Panc1 (cell line): ENCODE measurements at regions of chr10 and their contacts with region 1.

Region 1: GRCh38 chr10:91908337-91909116 is 759 bp downstream of the FGFBP3 start:
- DNase-seq: peak; percentile 87
- ATAC-seq: peak; percentile 96
- H3K4me3 ChIP-seq: peak overlapping the region; percentile 68 to 89
- H3K27ac ChIP-seq: peak overlapping the region; percentile 83
- H3K4me1 ChIP-seq: peaks cover 10% of the 10 kb centered on the region; the same call in 1 of the 2 replicates
- H3K27me3 ChIP-seq: no peaks in the 10 kb centered on the region
- CTCF ChIP-seq: peak; percentile 95

Region 2: GRCh38 chr10:90862908-90863514 is 1045.5 kb before region 1 on chr10:
- CTCF ChIA-PET with region 1: no interaction called
- POLR2A ChIA-PET with region 1: interaction called, 10 read pairs
- in situ Hi-C with region 1: no loop called
- intact Hi-C with region 1: no loop called
- DNase-seq: peak; percentile 36
- ATAC-seq: no peak
- H3K4me3 ChIP-seq: no peak overlapping the region
- H3K27ac ChIP-seq: no peak overlapping the region
- H3K4me1 ChIP-seq: no peaks in the 10 kb centered on the region; the same call in 1 of the 2 replicates
- H3K27me3 ChIP-seq: peaks cover 27% of the 10 kb centered on the region
- CTCF ChIP-seq: peak; percentile 82; the same call in 1 of the 2 replicates

Region 3: GRCh38 chr10:91389636-91390512 is 518.7 kb before region 1 on chr10:
- CTCF ChIA-PET with region 1: no interaction called
- POLR2A ChIA-PET with region 1: no interaction called
- in situ Hi-C with region 1: no loop called
- intact Hi-C with region 1: loop called (anchors 10 kb)
- DNase-seq: no peak
- ATAC-seq: peak; percentile 93
- H3K4me3 ChIP-seq: no peak overlapping the region
- H3K27ac ChIP-seq: no peak overlapping the region
- H3K4me1 ChIP-seq: no peaks in the 10 kb centered on the region
- H3K27me3 ChIP-seq: peaks cover 21% of the 10 kb centered on the region
- CTCF ChIP-seq: peak; percentile 73; the same call in 1 of the 2 replicates

Region 4: DNA sequence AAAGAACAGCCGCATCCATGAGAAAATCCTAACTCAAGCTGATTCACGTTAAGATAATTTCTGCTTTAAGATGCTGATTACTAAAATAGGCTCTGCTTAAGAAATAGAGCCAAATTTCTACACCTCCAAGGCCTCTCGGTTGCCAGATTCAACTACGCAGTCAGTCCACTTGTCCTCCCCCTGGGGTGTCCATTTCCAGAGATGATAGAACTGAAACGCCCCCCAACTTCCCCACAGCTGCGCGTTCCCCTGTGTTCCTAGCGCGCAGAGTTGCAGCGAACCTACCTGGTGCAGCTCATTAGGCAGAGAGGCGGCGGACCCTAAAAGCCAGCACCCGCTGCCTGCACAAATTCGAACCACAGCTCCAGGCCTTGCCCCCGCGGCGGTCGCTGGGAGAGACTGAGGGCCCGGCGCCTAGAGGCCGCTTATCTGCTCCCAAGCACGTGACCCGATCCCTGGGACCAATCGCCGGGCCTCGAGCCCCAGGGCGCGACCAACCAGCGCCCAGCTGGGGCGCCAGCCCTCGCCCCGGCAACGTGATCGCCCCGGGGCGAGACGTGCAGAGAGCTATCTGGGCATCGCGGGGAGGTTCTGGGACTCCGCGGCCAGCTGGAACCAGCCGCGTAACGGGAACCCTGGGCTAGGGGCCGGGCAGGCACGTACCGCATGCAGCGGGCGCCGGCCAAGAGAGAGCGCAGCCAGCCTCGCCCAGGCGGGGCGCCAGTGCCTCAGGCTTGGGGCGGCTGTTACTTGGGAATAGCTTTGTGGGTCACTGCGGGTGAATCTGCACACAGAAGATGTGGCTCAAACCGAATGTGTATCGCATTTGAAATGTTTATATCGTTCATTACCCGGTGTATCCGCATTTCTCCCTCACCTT is 275.6 kb before region 1 on chr10 and contains the start of gene PPP1R3C:
- CTCF ChIA-PET with region 1: no interaction called
- POLR2A ChIA-PET with region 1: no interaction called
- in situ Hi-C with region 1: no loop called
- intact Hi-C with region 1: loop called (anchors 10 kb)
- DNase-seq: peak; percentile 42
- ATAC-seq: peak; percentile 95
- H3K4me3 ChIP-seq: peak within 1 kb of the TSS; percentile 57 to 62
- H3K27ac ChIP-seq: peak within 1 kb of the TSS; percentile 45
- H3K4me1 ChIP-seq: peaks cover 7% of the 10 kb centered on the region; the same call in 1 of the 2 replicates
- H3K27me3 ChIP-seq: peaks cover 13% of the 10 kb centered on the region
- CTCF ChIP-seq: peak; percentile 75
- total RNA-seq, gene PPP1R3C: 1.2 TPM

Region 5: DNA sequence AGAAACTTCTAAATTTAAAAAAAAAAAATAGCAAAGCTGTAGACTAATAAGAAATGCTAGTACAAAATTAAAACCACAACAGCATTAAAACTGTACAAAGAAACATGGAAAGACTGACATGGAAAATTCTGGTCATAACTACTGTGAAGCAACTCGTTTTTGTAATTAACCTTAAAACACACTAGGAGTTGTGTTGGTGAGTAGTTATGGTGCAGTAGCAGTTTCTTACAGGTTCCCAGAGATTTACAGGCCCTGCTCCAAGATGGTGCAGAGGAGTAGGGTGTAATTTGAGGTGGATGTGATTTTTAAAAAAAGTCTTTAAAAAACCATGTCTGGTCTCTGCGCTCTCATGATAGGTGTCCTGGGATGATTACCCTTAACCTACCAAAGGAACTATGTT is 79.3 kb before region 1 on chr10:
- CTCF ChIA-PET with region 1: no interaction called
- POLR2A ChIA-PET with region 1: no interaction called
- in situ Hi-C with region 1: no loop called
- intact Hi-C with region 1: no loop called
- DNase-seq: no peak
- ATAC-seq: no peak
- H3K4me3 ChIP-seq: no peak overlapping the region
- H3K27ac ChIP-seq: no peak overlapping the region
- H3K4me1 ChIP-seq: no peaks in the 10 kb centered on the region
- H3K27me3 ChIP-seq: no peaks in the 10 kb centered on the region
- CTCF ChIP-seq: no peak

Region 6: DNA sequence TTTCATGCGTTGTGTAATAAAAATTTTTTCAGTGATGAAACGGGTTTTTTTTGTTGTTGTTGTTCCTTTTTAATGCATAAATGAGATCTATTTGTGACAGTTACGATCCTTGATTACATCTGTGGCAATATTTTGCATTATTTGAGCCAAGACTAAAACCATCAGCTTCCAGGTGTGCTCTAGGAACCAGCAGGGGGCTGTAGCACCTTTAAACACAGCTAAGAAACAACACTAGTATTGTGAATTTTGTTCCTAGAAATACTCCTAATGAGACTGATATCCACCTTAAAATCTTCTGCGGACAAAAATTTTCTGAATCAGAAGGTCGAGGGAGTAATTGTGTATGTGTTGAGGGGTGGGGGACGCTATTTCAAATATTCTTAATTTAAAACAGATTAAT is 51.9 kb before region 1 on chr10:
- CTCF ChIA-PET with region 1: interaction called, 9 read pairs
- POLR2A ChIA-PET with region 1: no interaction called
- in situ Hi-C with region 1: no loop called
- intact Hi-C with region 1: loop called (anchors 2 kb)
- DNase-seq: peak; percentile 8
- ATAC-seq: no peak
- H3K4me3 ChIP-seq: no peak overlapping the region
- H3K27ac ChIP-seq: no peak overlapping the region
- H3K4me1 ChIP-seq: no peaks in the 10 kb centered on the region
- H3K27me3 ChIP-seq: no peaks in the 10 kb centered on the region
- CTCF ChIP-seq: peak; percentile 69; the same call in 1 of the 2 replicates